GM10248 (cell line): ENCODE measurements at regions of chr3 and their contacts with region 1.

Region 1: GRCh38 chr3:50298836-50299637 is at the starts of genes HYAL3 and NAA80:
- DNase-seq: peak; percentile 99
- CTCF ChIP-seq: peak; percentile 22

Region 2: GRCh38 chr3:50337191-50337841 is 38.3 kb after region 1 on chr3:
- CTCF ChIA-PET with region 1: interaction called, 10 read pairs
- POLR2A ChIA-PET with region 1: interaction called, 13 read pairs
- DNase-seq: peak; percentile 99
- CTCF ChIP-seq: no peak